ENCODE measurements at regions of chr4 and their contacts with region 1.

Region 1: GRCh38 chr4:4995103-4995907 is 24.0 kb downstream of the CYTL1 start:
- DNase-seq: peak; percentile 79 to 81
- H3K4me3 ChIP-seq: no peak overlapping the region
- H3K27ac ChIP-seq: no peak overlapping the region
- H3K4me1 ChIP-seq: peaks cover 0 to 16% (median 7%) of the 10 kb centered on the region in 4 donors
- H3K27me3 ChIP-seq: no peaks in the 10 kb centered on the region
- CTCF ChIP-seq: peak; percentile 80 to 83

Region 2: DNA sequence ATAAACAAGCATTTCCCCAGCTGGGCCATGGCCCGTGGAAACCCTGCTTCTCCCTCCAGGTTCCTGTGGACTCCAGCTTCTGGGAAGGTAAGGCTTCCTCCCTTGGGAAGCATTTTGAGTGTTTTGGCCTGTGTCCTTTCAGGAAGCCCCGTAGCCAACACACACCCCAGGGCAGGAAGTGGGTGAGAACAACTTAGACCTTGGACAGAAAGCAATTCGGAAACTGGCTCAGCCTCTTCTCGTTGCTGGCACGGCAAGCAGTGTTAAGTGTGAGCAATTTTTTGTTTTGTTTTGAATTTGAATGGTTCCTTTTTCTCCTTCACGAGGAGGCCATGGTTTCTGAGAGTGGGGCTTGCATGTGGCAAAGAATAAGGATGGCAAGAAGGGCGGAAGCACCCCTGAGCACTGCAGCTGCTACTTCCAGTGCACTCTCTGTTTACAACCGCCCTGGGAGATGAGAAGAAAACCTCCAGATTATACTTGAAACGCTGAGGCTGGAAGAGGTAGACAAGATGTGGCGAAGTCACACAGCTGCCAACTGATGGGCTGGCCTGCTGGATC is 38.1 kb after region 1 on chr4:
- intact Hi-C with region 1: no loop called
- DNase-seq: peak; percentile 49 to 74
- H3K4me3 ChIP-seq: no peak overlapping the region
- H3K27ac ChIP-seq: peak overlapping the region; percentile 25 to 37
- H3K4me1 ChIP-seq: peaks cover 0 to 32% (median 4%) of the 10 kb centered on the region in 4 donors
- H3K27me3 ChIP-seq: no peaks in the 10 kb centered on the region
- CTCF ChIP-seq: no peak

Region 3: GRCh38 chr4:5416637-5417036 is 421.3 kb after region 1 on chr4:
- intact Hi-C with region 1: no loop called
- DNase-seq: no peak
- H3K4me3 ChIP-seq: no peak overlapping the region
- H3K27ac ChIP-seq: no peak overlapping the region
- H3K4me1 ChIP-seq: no peaks in the 10 kb centered on the region
- H3K27me3 ChIP-seq: no peaks in the 10 kb centered on the region
- CTCF ChIP-seq: no peak

Region 4: DNA sequence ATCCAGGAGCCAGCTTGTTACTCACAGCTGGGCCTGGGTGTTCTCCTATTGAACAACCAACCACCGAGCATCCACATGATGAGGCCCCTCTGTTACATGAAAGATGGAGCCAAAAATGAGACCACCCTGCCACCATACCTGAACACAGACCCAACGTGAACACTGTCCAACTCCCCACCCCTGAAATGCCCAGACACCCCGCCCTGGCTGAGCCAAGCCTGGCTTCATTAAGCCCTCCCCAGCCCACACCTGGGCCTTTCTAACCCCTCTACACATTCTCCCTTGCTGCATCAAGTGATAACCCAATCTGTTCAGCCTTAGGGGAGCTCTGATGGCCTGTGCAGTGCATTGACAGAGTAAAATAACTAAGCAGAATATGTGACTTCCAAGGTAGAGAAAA is 796.3 kb after region 1 on chr4:
- intact Hi-C with region 1: loop called (anchors 5 kb)
- DNase-seq: peak in 1 of 2 donors; percentile 42
- H3K4me3 ChIP-seq: no peak overlapping the region
- H3K27ac ChIP-seq: no peak overlapping the region
- H3K4me1 ChIP-seq: no peaks in the 10 kb centered on the region
- H3K27me3 ChIP-seq: no peaks in the 10 kb centered on the region
- CTCF ChIP-seq: no peak